B cell (primary cell): ENCODE measurements at regions of chr12 and their contacts with region 1.

Region 1: DNA sequence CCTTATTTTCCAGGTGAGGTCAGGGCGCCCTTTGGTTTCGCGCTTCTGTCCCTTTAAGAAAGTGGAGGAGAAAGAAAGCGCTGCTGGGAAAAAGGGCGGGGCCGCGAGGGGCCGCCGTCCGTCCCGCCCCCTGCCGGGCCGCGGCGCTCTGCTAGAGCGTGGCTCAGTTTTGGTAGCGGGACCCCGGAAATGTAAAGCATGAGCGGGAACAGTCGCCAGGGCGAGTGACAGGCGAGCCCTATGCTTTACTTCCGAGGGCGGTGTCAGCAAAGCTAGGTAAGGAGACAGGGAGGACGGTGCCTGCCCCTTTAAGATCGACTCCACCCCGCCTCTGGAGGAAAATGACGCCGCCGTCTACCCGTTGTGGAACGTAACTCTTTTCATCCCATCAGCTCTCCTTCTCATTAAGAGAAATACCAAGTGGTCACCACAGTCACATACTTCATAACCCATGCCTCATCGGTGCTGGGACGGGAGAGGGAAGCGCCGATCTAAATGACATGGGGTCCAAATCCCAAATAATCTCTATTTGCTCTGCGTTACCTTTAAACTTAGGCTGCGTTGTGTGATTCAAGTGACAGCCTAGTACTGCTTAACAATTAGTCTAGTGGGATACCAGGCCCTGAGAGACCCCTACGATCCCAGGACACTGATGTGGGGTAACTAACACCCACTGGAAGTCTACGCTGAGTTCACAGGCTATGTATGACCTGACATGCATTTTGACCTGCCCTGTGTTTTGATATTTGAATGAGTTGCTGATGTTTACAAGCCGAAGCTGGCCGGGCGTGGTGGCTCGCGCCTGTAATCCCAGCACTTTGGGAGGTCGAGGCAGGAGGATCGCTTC is at the start of gene ETFBKMT:
- DNase-seq: peak; percentile 96
- ATAC-seq: peak; percentile 97
- H3K4me3 ChIP-seq: peak within 1 kb of the TSS; percentile 63 to 94 (median 86)
- H3K4me3 Mint-ChIP-seq: peak within 1 kb of the TSS; percentile 93
- H3K27ac ChIP-seq: peak within 1 kb of the TSS; percentile 93 to 97
- H3K27ac Mint-ChIP-seq: peak within 1 kb of the TSS; percentile 95
- H3K4me1 ChIP-seq: peaks cover 25 to 31% of the 10 kb centered on the region in 2 donors
- H3K4me1 Mint-ChIP-seq: peaks cover 29% of the 10 kb centered on the region
- H3K27me3 ChIP-seq: no peaks in the 10 kb centered on the region
- H3K27me3 Mint-ChIP-seq: no peaks in the 10 kb centered on the region
- CTCF ChIP-seq: peak; percentile 31
- total RNA-seq, gene ETFBKMT: 1.4 and 2.4 TPM in 2 replicates

Region 2: GRCh38 chr12:31325877-31326631 is 333.3 kb before region 1 on chr12 and contains the start of gene SINHCAF:
- CTCF ChIA-PET with region 1: interaction called, 3 read pairs
- POLR2A ChIA-PET with region 1: interaction called, 4 read pairs
- intact Hi-C with region 1: loop called (anchors 2 kb)
- DNase-seq: peak; percentile 99
- ATAC-seq: peak; percentile 64
- H3K4me3 ChIP-seq: peak within 1 kb of the TSS; percentile 70 to 96 (median 93)
- H3K4me3 Mint-ChIP-seq: peak within 1 kb of the TSS; percentile 98
- H3K27ac ChIP-seq: peak within 1 kb of the TSS; percentile 97
- H3K27ac Mint-ChIP-seq: peak within 1 kb of the TSS; percentile 99
- H3K4me1 ChIP-seq: peaks cover 27 to 36% of the 10 kb centered on the region in 2 donors
- H3K4me1 Mint-ChIP-seq: peaks cover 39% of the 10 kb centered on the region
- H3K27me3 ChIP-seq: no peaks in the 10 kb centered on the region
- H3K27me3 Mint-ChIP-seq: no peaks in the 10 kb centered on the region
- CTCF ChIP-seq: no peak
- total RNA-seq, gene SINHCAF: 127 and 129 TPM in 2 replicates

Region 3: GRCh38 chr12:31647086-31647491 is 12.2 kb before region 1 on chr12:
- CTCF ChIA-PET with region 1: interaction called, 23 read pairs
- POLR2A ChIA-PET with region 1: no interaction called
- intact Hi-C with region 1: no loop called
- DNase-seq: peak; percentile 44
- ATAC-seq: peak; percentile 28
- H3K4me3 ChIP-seq: no peak overlapping the region
- H3K4me3 Mint-ChIP-seq: peak overlapping the region; percentile 24
- H3K27ac ChIP-seq: no peak overlapping the region
- H3K27ac Mint-ChIP-seq: peak overlapping the region; percentile 38
- H3K4me1 ChIP-seq: peaks cover 21 to 22% of the 10 kb centered on the region in 2 donors
- H3K4me1 Mint-ChIP-seq: peaks cover 29% of the 10 kb centered on the region
- H3K27me3 ChIP-seq: no peaks in the 10 kb centered on the region
- H3K27me3 Mint-ChIP-seq: no peaks in the 10 kb centered on the region
- CTCF ChIP-seq: no peak

Region 4: DNA sequence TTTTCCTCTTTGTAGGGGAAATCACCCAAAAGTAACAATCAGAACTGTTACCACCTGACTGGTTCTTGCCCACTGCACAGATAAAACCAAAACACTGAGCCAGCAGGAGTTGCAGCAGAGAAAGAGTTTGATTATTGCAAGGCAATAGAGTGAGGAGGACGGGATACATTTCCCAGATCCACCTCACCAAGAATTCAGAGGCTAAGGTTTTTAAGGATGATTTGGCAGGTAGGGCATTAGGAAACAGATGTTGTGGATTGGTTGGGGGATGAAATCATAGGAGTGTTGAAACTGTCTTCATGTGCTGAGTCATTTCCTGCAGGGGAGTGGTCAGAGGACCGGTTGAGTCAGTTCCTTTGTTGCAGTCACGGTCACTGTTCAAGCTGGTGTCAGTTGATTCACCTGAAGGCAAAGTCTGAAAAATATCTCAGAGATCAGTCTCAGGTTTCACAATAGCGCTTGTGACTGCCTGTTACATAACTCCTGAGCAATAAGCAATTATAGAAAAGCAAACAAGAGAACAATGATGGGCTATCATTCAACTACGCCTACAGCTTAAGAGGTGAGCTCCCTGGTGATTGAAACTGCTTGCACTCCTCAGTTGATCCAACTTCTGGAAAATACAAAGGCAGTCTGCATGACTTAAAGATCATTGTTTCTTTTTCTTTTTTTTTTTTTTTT is 89.9 kb after region 1 on chr12:
- CTCF ChIA-PET with region 1: no interaction called
- POLR2A ChIA-PET with region 1: no interaction called
- intact Hi-C with region 1: loop called (anchors 1 kb)
- DNase-seq: peak; percentile 67
- ATAC-seq: peak; percentile 70
- H3K4me3 ChIP-seq: peak overlapping the region in 2 of 5 experiments; percentile 1 to 26
- H3K4me3 Mint-ChIP-seq: peak overlapping the region; percentile 79
- H3K27ac ChIP-seq: peak overlapping the region; percentile 50 to 76
- H3K27ac Mint-ChIP-seq: peak overlapping the region; percentile 87
- H3K4me1 ChIP-seq: peaks cover 73 to 76% of the 10 kb centered on the region in 2 donors
- H3K4me1 Mint-ChIP-seq: peaks cover 72% of the 10 kb centered on the region
- H3K27me3 ChIP-seq: no peaks in the 10 kb centered on the region
- H3K27me3 Mint-ChIP-seq: no peaks in the 10 kb centered on the region
- CTCF ChIP-seq: no peak

Region 5: GRCh38 chr12:31959161-31959700 is 299.9 kb after region 1 on chr12 and contains the start of gene RESF1:
- CTCF ChIA-PET with region 1: interaction called, 12 read pairs
- POLR2A ChIA-PET with region 1: interaction called, 15 read pairs
- intact Hi-C with region 1: loop called (anchors 1 kb)
- DNase-seq: peak; percentile 91
- ATAC-seq: peak; percentile 85
- H3K4me3 ChIP-seq: peak within 1 kb of the TSS; percentile 65 to 98 (median 70)
- H3K4me3 Mint-ChIP-seq: peak within 1 kb of the TSS; percentile 96
- H3K27ac ChIP-seq: peak within 1 kb of the TSS; percentile 79 to 82
- H3K27ac Mint-ChIP-seq: peak within 1 kb of the TSS; percentile 96
- H3K4me1 ChIP-seq: peaks cover 49 to 50% of the 10 kb centered on the region in 2 donors
- H3K4me1 Mint-ChIP-seq: peaks cover 68% of the 10 kb centered on the region
- H3K27me3 ChIP-seq: no peaks in the 10 kb centered on the region
- H3K27me3 Mint-ChIP-seq: no peaks in the 10 kb centered on the region
- CTCF ChIP-seq: no peak
- total RNA-seq, gene RESF1: 350 and 352 TPM in 2 replicates

Region 6: GRCh38 chr12:32679091-32679919 is 1020.0 kb after region 1 on chr12 and contains the start of gene DNM1L:
- CTCF ChIA-PET with region 1: no interaction called
- POLR2A ChIA-PET with region 1: interaction called, 3 read pairs
- intact Hi-C with region 1: loop called (anchors 1 kb)
- DNase-seq: peak; percentile 93
- ATAC-seq: peak; percentile 96
- H3K4me3 ChIP-seq: peak within 1 kb of the TSS; percentile 62 to 92 (median 86)
- H3K4me3 Mint-ChIP-seq: peak within 1 kb of the TSS; percentile 93
- H3K27ac ChIP-seq: peak within 1 kb of the TSS; percentile 63 to 79
- H3K27ac Mint-ChIP-seq: peak within 1 kb of the TSS; percentile 90
- H3K4me1 ChIP-seq: peaks cover 14 to 23% of the 10 kb centered on the region in 2 donors
- H3K4me1 Mint-ChIP-seq: peaks cover 34% of the 10 kb centered on the region
- H3K27me3 ChIP-seq: no peaks in the 10 kb centered on the region
- H3K27me3 Mint-ChIP-seq: no peaks in the 10 kb centered on the region
- CTCF ChIP-seq: no peak
- total RNA-seq, gene DNM1L: 74.2 and 76.0 TPM in 2 replicates